Aorta (tissue), 5 donors: ENCODE measurements at regions of chr22 and their contacts with region 1.

Region 1: DNA sequence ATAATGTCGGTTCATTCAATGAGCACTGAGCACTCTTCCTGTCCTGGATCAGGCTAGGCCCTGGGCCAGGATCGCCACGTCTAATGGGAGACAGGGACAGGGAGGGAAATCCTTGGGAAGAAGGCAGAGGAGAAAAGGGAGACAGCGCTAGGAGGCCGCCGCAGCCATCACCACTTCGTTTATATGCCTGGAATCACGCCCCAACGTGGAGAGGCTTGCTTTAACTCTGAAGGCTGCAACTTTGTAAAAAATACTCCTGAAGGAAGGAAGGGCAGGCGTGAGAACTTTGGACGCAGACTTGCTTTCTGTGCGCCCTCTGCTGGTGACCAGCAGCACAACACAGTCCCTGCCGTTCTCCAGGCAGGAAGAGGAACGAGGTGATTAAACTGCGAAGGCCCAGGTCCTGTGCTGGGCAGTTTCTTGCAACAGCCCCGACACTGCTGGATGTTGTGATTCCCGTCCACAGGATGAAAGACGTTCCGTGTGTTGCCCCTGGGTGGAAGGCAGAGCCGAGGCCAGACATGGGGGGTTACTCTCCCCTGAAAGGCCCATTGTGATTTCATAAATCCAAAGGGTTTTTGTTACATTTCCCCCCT is 22.1 kb downstream of the RIBC2 start:
- DNase-seq: peak; percentile 91 to 95
- ATAC-seq: peak; percentile 96
- H3K4me3 ChIP-seq: no peak overlapping the region
- H3K27ac ChIP-seq: peak overlapping the region in 1 of 2 donors; percentile 32
- H3K4me1 ChIP-seq: no peaks in the 10 kb centered on the region
- H3K27me3 ChIP-seq: no peaks in the 10 kb centered on the region

Region 2: GRCh38 chr22:45268958-45269844 is 166.4 kb before region 1 on chr22:
- intact Hi-C with region 1: loop called (anchors 1 to 2 kb)
- DNase-seq: peak; percentile 89 to 96
- ATAC-seq: peak; percentile 94
- H3K4me3 ChIP-seq: peak overlapping the region; percentile 57 to 89
- H3K27ac ChIP-seq: peak overlapping the region in 1 of 2 donors; percentile 39
- H3K4me1 ChIP-seq: no peaks in the 10 kb centered on the region
- H3K27me3 ChIP-seq: no peaks in the 10 kb centered on the region

Region 3: DNA sequence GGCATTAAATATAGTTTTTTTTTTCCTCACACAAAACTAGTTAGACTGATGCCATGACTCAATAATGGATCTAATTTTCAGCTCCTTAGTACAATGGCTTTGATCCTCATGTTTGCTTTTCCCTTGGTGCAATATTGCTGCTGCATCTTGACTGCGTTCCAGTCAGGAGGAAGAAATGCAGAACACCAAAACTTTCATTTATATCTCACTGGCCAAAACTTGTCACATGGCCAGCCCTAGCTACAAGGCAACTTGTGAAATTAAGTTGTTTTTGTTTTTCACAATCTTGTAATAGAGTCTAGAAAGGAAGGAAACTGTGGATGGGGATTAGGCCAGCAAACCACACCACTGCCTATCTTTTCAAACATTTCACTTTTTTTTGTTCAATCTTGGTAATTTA is 58.9 kb before region 1 on chr22:
- intact Hi-C with region 1: no loop called
- DNase-seq: peak in 1 of 2 donors; percentile 51
- ATAC-seq: no peak
- H3K4me3 ChIP-seq: no peak overlapping the region
- H3K27ac ChIP-seq: no peak overlapping the region
- H3K4me1 ChIP-seq: no peaks in the 10 kb centered on the region
- H3K27me3 ChIP-seq: peaks cover 0 to 2% of the 10 kb centered on the region in 2 donors